Activated CD4-positive, alpha-beta T cell treated with anti-CD3 and anti-CD28 coated beads for 36 hours (primary cell): ENCODE measurements at regions of chr1 and their contacts with region 1.

Region 1: GRCh38 chr1:40508375-40509341 is at the start of gene EXO5:
- DNase-seq: peak; percentile 94
- ATAC-seq: peak; percentile 99
- H3K4me3 Mint-ChIP-seq: peak within 1 kb of the TSS; percentile 75
- H3K27ac Mint-ChIP-seq: peak within 1 kb of the TSS; percentile 88
- H3K4me1 Mint-ChIP-seq: peaks cover 14% of the 10 kb centered on the region
- H3K27me3 Mint-ChIP-seq: no peaks in the 10 kb centered on the region
- total RNA-seq, gene EXO5: 9.5 to 11.9 TPM

Region 2: GRCh38 chr1:40476924-40477677 is 31.6 kb before region 1 on chr1 and contains the start of gene ZFP69:
- CTCF ChIA-PET with region 1: interaction called, 3 read pairs
- POLR2A ChIA-PET with region 1: interaction called, 3 read pairs
- intact Hi-C with region 1: loop called in 1 of 2 experiments (anchors 1 kb)
- DNase-seq: peak; percentile 81
- ATAC-seq: peak; percentile 84
- H3K4me3 Mint-ChIP-seq: peak within 1 kb of the TSS; percentile 80
- H3K27ac Mint-ChIP-seq: peak within 1 kb of the TSS; percentile 81
- H3K4me1 Mint-ChIP-seq: peaks cover 21% of the 10 kb centered on the region
- H3K27me3 Mint-ChIP-seq: no peaks in the 10 kb centered on the region
- total RNA-seq, gene ZFP69: 4.6 to 5.4 TPM

Region 3: DNA sequence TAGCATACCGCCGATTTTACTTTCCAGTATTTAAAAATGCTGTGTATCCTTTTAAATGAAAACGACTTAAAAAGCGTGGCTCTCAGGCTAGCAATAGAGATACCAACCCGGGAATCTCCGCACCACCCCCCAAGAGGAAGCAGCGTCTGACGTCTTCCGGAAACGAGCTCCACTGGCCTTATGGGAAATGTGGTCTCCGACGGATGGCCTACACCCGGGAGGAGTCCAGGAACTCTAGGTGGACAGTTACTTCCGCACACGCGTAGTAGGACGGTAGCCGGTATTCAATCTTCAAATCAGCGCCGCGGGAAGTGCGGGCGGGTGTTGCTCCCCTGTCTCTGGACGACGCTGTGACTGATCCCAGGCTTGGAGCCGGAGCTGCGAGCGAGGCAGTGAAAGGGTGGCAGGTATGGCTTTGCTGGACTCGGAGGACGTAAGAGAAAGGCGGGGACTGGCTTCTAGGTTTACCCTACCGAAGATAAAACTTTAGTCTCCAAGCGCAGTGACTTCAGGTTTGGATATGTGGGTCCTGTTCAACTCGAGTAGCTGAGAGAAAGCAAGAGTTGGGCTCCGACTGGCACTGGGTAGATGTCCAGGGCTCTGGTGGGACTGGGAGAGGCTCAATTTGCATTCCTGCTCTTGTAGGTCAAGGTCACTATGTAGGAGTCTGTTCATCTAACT is 22.9 kb after region 1 on chr1 and contains the start of gene ZNF684:
- CTCF ChIA-PET with region 1: interaction called, 15 read pairs
- POLR2A ChIA-PET with region 1: interaction called, 4 read pairs
- intact Hi-C with region 1: loop called (anchors 1 kb)
- DNase-seq: peak; percentile 91
- ATAC-seq: peak; percentile 98
- H3K4me3 Mint-ChIP-seq: peak within 1 kb of the TSS; percentile 88
- H3K27ac Mint-ChIP-seq: peak within 1 kb of the TSS; percentile 83
- H3K4me1 Mint-ChIP-seq: peaks cover 17% of the 10 kb centered on the region
- H3K27me3 Mint-ChIP-seq: peaks cover 6% of the 10 kb centered on the region
- total RNA-seq, gene ZNF684: 4.5 to 6.6 TPM